Right ventricle myocardium superior (tissue), 1 donor: ENCODE measurements at regions of chr12 and their contacts with region 1.

Region 1: GRCh38 chr12:92078167-92079053 is 67.2 kb downstream of the BTG1 start:
- DNase-seq: no peak
- ATAC-seq: peak; percentile 49

Region 2: DNA sequence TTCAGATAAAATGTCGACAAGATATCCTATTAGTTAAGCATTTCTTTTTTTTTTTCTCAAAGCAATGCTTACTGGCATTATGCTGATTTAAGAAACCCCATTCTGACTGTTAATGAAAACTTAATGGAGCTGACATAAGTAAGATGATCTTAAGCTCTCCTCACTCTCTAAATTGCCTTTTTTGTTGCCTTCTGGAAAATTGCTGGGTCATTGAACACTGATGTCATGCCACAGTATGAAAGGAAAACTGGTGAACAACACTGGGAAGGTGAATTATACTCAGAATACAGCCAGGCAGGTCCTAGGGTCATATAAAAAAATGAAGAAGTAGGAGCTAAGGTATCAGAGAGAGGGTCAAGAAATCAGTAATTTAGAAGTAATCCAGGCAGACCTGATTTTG is 112.6 kb before region 1 on chr12:
- intact Hi-C with region 1: no loop called
- DNase-seq: no peak
- ATAC-seq: no peak

Region 3: DNA sequence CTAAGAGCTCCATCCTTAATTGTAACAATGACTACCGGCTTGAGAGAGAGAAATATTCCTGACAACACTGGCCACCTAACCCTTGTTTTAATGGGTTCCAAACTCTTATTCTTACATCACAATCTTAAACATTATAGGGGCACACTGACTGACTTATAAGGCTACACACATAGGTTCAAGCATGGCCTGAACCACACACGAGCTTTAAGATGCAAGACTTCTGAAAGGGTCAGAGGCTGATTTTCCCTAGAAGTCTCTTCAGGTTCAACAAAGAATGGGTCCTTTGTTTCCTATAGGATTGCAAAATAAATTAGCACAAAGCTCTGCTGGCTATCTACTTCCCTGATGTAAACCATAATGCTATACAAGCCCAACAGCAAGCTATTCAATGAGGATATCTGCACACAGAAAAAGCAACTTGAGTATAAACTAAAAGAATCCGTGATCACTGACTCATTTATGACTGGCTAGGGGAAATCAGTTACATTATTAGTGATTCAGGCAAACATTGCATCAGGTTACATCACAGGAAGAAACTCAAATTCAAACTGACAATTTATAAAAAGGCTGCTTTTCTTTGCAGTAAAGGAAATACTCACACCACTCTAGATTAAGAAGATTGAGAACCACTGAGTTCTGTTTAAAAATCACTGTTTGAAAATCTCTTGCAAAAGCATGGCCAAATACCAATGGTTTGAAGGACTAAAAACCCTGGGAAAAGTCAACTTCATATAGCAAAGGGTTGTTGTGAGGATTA is 58.7 kb after region 1 on chr12:
- intact Hi-C with region 1: loop called (anchors 5 kb)
- DNase-seq: no peak
- ATAC-seq: no peak